ENCODE measurements at regions of chr16 and their contacts with region 1.

Region 1: DNA sequence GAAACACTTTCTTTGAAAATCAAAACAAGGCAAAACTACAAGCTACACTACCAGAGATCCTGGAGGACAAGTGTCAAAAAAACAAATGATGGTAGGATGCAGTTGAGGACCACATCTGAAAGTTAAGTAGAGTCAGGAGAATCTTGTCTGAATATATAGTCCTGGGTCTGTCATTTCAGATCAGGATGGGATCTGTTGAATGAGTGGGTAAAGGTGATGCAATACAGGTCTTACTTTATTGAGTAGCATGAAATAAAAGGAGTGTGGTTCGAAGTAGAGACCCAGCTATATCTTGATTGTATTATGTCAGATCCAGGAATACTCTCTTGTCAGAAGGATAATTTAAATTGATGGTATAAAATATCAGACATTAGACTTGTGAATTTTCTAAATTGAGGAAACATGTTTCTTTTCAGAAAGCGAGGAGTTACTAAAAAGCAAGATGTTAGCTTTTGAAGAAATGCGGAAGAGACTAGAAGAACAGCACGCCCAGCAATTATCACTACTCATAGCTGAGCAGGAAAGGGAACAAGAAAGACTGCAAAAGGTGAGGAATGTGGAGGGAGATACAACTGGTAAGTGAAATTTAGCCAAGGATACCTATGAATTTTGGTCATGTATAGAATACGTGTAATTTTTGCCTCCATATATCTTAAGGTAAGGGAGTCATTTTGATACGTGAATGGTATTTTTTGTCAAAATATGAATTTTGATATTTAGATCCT is 15.1 kb upstream of the VPS35L start:
- DNase-seq: no peak
- H3K4me3 Mint-ChIP-seq: no peak overlapping the region
- H3K27ac Mint-ChIP-seq: no peak overlapping the region
- H3K4me1 Mint-ChIP-seq: peaks cover 14% of the 10 kb centered on the region
- H3K27me3 Mint-ChIP-seq: no peaks in the 10 kb centered on the region

Region 2: DNA sequence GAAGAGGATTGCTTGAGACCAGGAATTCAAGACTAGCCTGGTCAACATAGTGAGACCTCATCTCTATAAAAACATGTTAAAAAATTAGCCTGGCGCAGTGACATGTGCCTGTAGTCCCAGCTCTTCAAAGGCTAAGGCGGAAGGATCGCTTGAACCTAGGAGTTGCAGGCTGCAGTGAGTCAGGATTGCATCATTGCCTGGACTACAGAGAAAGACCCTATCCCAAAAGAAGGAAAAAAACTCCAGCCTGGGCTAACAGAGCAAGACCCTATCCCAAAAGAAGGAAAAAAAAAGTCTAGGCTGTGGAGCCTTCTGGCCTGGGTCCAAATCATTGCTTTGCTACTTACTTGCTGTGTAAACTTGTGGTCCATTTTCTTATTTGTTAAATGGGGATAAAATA is 11.7 kb before region 1 on chr16:
- CTCF ChIA-PET with region 1: interaction called, 12 read pairs
- POLR2A ChIA-PET with region 1: no interaction called
- DNase-seq: no peak
- H3K4me3 Mint-ChIP-seq: no peak overlapping the region
- H3K27ac Mint-ChIP-seq: no peak overlapping the region
- H3K4me1 Mint-ChIP-seq: peaks cover 22% of the 10 kb centered on the region
- H3K27me3 Mint-ChIP-seq: no peaks in the 10 kb centered on the region

Region 3: DNA sequence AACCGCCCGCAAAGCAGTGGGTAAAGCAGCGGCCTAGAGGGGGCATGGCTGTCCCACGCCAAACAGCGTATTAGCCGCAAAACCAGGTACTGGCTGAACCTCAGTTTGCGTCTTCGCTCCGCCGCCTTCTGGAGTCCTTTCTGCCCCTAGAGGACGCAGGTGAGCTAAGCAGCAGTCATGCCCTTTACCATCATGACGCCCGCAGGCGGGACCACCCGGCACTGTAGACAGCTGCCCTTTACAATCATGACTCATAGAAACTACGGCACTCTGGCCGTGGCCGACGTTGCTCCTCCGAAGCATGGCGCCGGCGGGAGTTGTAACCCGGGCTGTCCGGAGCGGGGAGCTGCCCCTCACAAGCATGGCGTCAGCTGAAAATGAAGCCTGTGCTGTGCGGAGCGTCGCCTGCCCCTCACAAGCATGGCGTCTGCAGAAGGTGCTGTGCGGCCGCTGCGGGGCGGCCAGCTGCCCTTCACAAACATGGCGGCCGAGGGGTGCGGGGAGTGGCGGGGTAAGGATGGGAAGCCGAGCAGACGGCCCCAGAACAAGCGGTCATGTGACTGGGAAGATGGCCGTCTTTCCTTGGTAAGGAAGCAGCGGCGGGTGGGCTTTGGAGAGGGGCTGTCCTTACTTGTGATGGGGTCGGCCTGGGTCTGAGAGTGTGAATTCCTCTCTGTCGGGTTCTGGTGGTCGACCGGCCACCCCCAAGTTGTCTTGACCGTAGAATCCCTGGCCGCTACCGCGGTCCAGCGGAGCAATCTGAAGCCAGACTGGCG is 14.9 kb after region 1 on chr16 and contains the start of gene VPS35L:
- CTCF ChIA-PET with region 1: interaction called, 13 read pairs
- POLR2A ChIA-PET with region 1: no interaction called
- DNase-seq: peak; percentile 96
- H3K4me3 Mint-ChIP-seq: peak within 1 kb of the TSS; percentile 93
- H3K27ac Mint-ChIP-seq: peak within 1 kb of the TSS; percentile 91
- H3K4me1 Mint-ChIP-seq: peaks cover 25% of the 10 kb centered on the region
- H3K27me3 Mint-ChIP-seq: no peaks in the 10 kb centered on the region
- total RNA-seq, gene VPS35L: 59.3 to 59.6 TPM

Region 4: DNA sequence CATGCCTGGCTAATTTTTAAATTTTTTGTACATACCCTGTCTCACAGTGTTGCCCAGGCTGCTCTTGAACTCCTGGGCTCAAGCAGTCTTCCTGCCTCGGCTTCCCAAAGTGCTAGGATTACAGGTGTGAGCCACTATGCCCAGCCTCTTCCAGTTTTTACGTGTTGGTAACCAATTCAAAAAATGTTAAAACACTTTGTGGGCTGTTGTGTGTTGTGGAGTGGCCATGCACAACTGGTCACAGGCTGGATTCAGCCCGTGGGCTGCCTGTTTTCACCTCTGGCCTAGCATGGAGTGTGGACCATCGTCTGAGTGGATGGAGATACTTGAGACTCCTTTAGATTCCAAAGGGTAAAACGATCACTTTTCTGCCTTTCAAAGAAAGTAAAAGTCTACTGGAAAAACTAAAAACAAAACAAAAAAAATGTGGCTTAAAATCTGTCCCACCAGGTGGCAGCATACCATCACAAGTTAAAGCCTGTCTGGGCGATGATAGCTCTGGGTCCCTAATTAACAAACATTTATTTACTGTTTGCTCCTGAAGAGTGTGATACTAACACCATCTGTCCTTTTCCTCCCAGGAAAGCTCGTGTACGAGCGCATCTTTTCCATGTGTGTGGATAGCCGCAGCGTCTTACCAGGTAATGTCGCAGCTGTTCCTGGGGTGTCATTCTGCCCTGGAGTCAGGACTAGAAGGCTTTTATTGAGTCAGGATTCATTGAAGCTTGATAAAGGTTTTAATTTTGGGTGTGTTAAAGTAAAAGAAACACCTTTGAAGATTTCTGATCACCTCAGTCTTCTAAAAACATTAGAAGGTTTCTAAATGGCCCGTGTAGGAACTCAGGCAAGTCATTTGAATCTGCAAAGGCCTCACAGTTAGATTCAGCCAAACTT is 60.9 kb after region 1 on chr16:
- CTCF ChIA-PET with region 1: no interaction called
- POLR2A ChIA-PET with region 1: no interaction called
- DNase-seq: peak; percentile 46
- H3K4me3 Mint-ChIP-seq: no peak overlapping the region
- H3K27ac Mint-ChIP-seq: no peak overlapping the region
- H3K4me1 Mint-ChIP-seq: peaks cover 5% of the 10 kb centered on the region
- H3K27me3 Mint-ChIP-seq: no peaks in the 10 kb centered on the region

Region 5: DNA sequence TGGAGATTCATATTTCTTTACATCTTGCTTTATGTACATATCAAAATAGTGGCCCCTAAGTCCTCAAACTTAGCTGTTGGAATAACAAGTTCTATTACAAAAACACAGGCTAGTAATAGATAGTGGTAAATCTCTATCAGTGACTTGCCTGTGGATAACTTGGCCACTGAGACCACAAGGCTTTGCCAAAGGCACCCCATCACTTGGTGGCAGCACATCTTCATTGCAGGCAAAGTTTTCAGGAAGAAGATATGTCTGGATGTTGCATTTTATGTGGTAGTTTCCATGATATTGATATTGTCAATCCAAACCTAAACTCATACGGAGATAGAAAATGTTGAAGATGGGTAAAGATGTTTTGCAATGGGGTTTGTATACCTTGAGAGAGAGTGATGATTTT is 119.2 kb after region 1 on chr16:
- CTCF ChIA-PET with region 1: no interaction called
- POLR2A ChIA-PET with region 1: no interaction called
- DNase-seq: no peak
- H3K4me3 Mint-ChIP-seq: no peak overlapping the region
- H3K27ac Mint-ChIP-seq: no peak overlapping the region
- H3K4me1 Mint-ChIP-seq: no peaks in the 10 kb centered on the region
- H3K27me3 Mint-ChIP-seq: no peaks in the 10 kb centered on the region